GM10248 (cell line): ENCODE measurements at regions of chr5 and their contacts with region 1.

Region 1: DNA sequence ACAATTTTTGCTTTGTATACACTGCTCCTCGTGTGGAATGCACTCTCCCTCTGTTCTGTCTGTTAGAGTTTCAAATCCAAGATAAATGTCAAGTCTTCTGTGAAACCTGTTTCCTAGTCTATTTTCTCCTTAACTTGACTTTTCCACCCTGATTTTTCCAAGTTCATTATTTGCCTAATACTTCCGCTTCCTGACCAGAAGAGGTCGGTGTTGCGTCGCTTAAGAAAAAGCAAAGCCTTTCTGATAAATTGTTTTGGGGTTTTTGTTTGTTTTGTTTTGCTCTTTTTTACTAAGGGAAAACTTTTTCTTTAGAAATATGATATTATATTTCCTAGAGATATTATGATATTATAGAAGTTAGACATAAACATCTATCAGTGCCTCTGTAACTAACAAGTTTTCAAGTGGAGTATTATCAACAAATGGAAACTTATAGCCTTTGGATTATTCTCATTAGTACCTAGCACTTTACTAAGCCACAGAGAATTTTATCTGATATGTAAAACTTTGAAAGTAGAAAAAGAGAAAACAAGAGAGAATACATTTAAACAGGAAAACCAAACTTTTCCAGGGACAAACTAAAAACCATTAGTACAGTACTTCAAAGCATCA is 55.8 kb downstream of the PHAX start:
- DNase-seq: peak; percentile 49
- CTCF ChIP-seq: peak; percentile 81

Region 2: GRCh38 chr5:126776497-126777256 is 120.2 kb after region 1 on chr5 and contains the start of gene LMNB1:
- CTCF ChIA-PET with region 1: interaction called, 19 read pairs
- POLR2A ChIA-PET with region 1: no interaction called
- DNase-seq: peak; percentile 93
- CTCF ChIP-seq: no peak

Region 3: GRCh38 chr5:126801992-126802294 is 145.4 kb after region 1 on chr5:
- CTCF ChIA-PET with region 1: interaction called, 24 read pairs
- POLR2A ChIA-PET with region 1: interaction called, 4 read pairs
- DNase-seq: peak; percentile 26
- CTCF ChIP-seq: peak; percentile 51

Region 4: DNA sequence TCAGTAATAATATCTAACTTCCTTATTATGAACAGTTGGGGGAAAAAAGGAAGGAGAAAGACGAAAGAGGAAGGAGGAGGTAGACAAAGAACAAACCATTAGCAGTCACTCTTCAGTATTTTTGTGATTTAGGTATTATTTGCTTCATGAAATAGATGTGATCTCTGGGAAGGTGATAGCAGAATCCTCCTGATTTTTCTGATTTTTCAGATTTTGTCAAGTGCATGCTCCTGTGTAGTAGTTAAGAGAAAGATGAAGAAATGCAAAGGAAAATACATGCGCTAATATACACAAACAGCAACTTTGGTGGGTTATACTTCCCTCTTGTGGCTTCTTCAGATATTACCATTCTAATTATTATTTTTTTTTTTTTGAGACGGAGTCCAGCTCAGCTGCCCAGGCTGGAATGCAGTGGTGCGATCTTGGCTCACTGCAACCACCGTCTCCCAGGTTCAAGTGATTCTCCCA is 152.1 kb after region 1 on chr5:
- CTCF ChIA-PET with region 1: interaction called, 13 read pairs
- POLR2A ChIA-PET with region 1: no interaction called
- DNase-seq: peak; percentile 47
- CTCF ChIP-seq: peak; percentile 35

Region 5: DNA sequence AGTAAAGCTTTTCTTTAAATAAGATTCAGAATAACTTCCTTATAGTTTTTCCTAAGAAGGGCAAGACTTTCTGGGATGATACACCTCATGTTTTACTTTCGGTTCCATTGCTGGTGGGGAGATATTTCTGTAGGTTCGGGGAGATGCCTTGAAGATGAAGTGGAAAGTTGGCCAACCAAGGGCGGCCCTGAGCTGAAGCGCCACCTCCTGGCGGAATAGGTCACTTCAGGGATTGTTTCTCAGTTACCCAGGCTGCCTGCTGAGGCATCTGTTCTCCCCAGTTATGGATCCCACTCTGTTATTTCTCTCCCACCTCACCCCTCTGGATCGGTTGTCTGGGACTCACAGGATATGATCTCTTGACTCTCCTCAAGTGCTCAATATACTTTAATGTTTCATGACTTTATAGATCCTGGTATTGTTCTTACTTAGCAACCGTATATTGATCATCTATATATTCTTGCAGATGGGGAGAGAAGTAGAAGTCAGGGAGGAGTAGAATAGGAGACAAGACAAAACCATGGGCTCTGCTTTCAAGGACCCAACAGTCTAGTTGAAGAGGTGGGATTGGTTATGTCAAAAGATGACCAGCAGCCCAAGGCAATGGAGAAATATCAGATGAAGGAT is 657.5 kb after region 1 on chr5:
- CTCF ChIA-PET with region 1: interaction called, 13 read pairs
- POLR2A ChIA-PET with region 1: no interaction called
- DNase-seq: peak; percentile 64
- CTCF ChIP-seq: peak; percentile 85

Region 6: GRCh38 chr5:127492854-127493738 is 836.6 kb after region 1 on chr5:
- CTCF ChIA-PET with region 1: interaction called, 11 read pairs
- POLR2A ChIA-PET with region 1: no interaction called
- DNase-seq: peak; percentile 25
- CTCF ChIP-seq: peak; percentile 56